Activated T-helper 2 cell treated with anti-CD3 and anti-CD28 coated beads, Interferon-gamma antibody, Interleukin-2, Interleukin-4, amounts not matched to agents 10 μg/mL and 5 μg/mL and 100 μg/mL, durations not matched to agents 14 hours and 24 hours and 36 hours (primary cell): ENCODE measurements at regions of chr5 and their contacts with region 1.

Region 1: GRCh38 chr5:53008751-53009150 is 19.6 kb downstream of the ITGA2 start:
- DNase-seq: no peak
- H3K4me3 Mint-ChIP-seq: no peak overlapping the region
- H3K27ac Mint-ChIP-seq: peak overlapping the region; percentile 62
- H3K4me1 Mint-ChIP-seq: peaks cover 66% of the 10 kb centered on the region
- H3K27me3 Mint-ChIP-seq: peaks cover 23% of the 10 kb centered on the region

Region 2: DNA sequence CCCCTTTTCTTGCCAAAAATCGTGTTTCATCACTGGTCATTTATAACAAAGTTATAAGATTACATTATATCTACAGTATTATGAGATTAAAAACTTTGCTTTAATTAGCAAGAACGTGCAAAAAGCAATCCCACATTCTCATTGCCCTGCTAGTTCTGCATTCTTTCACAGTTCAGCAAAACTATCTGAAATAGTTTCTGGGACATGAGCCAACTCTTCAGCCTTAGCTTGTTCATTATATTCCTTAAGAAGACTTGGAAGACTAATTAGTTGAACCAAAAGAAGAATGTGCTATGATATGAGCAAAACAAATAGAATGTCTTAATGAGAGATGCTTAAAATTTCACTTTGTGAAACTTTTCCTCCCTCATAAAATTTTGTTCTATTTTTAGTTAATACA is 144.4 kb before region 1 on chr5:
- intact Hi-C with region 1: no loop called
- DNase-seq: no peak
- H3K4me3 Mint-ChIP-seq: no peak overlapping the region
- H3K27ac Mint-ChIP-seq: no peak overlapping the region
- H3K4me1 Mint-ChIP-seq: no peaks in the 10 kb centered on the region
- H3K27me3 Mint-ChIP-seq: peaks cover 9% of the 10 kb centered on the region

Region 3: GRCh38 chr5:52948418-52949076 is 60.2 kb before region 1 on chr5:
- intact Hi-C with region 1: loop called (anchors 5 kb)
- DNase-seq: peak; percentile 53
- H3K4me3 Mint-ChIP-seq: no peak overlapping the region
- H3K27ac Mint-ChIP-seq: no peak overlapping the region
- H3K4me1 Mint-ChIP-seq: peaks cover 23% of the 10 kb centered on the region
- H3K27me3 Mint-ChIP-seq: peaks cover 20% of the 10 kb centered on the region

Region 4: DNA sequence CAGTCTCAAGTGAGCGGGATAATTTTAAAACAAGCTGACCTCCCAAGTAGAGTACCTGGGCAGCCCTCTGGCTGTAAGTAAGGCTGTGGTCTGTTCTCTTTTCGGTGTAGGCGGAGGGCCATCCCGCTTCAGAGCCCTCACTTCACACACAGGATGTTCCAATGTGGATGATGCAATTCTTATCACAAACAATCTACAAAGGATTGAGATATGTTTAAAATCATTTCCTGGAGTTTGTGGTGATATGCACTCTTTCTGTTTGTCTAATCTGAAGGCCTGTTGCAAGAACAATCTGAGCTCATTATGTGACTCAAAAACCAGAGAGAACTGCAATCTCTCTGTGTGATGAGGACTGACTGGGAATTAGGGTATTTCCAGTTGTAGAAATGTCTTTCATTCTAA is 22.9 kb after region 1 on chr5:
- intact Hi-C with region 1: loop called (anchors 1 kb)
- DNase-seq: peak; percentile 50
- H3K4me3 Mint-ChIP-seq: no peak overlapping the region
- H3K27ac Mint-ChIP-seq: peak overlapping the region; percentile 56
- H3K4me1 Mint-ChIP-seq: peaks cover 57% of the 10 kb centered on the region
- H3K27me3 Mint-ChIP-seq: peaks cover 6% of the 10 kb centered on the region

Region 5: DNA sequence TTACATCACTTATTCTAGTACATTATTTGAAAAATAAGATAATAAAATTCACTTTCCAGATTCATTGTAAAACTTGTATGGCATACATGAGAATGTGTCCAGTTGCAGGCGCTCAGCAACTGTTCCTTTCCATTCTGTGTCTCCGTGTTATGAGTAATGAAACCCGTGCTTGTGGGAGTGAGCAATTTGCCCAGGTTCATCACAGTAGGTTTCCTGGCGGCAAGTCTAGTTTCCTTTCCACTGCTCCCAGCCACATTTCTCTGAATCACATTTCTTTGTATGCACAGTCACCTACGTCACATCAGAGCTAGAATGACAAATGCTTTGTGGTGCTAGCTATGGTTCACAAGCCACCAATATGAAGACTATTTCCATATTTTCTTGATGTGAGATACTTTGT is 60.9 kb after region 1 on chr5:
- intact Hi-C with region 1: loop called (anchors 1 kb)
- DNase-seq: peak; percentile 68
- H3K4me3 Mint-ChIP-seq: no peak overlapping the region
- H3K27ac Mint-ChIP-seq: peak overlapping the region; percentile 14
- H3K4me1 Mint-ChIP-seq: peaks cover 35% of the 10 kb centered on the region
- H3K27me3 Mint-ChIP-seq: peaks cover 8% of the 10 kb centered on the region